Aorta (tissue), 5 donors: ENCODE measurements at regions of chr6 and their contacts with region 1.

Region 1: GRCh38 chr6:73732845-73733675 is 37.1 kb downstream of the CD109 start:
- DNase-seq: peak; percentile 73 to 77
- ATAC-seq: peak; percentile 90
- H3K4me3 ChIP-seq: no peak overlapping the region
- H3K27ac ChIP-seq: no peak overlapping the region
- H3K4me1 ChIP-seq: no peaks in the 10 kb centered on the region
- H3K27me3 ChIP-seq: no peaks in the 10 kb centered on the region

Region 2: DNA sequence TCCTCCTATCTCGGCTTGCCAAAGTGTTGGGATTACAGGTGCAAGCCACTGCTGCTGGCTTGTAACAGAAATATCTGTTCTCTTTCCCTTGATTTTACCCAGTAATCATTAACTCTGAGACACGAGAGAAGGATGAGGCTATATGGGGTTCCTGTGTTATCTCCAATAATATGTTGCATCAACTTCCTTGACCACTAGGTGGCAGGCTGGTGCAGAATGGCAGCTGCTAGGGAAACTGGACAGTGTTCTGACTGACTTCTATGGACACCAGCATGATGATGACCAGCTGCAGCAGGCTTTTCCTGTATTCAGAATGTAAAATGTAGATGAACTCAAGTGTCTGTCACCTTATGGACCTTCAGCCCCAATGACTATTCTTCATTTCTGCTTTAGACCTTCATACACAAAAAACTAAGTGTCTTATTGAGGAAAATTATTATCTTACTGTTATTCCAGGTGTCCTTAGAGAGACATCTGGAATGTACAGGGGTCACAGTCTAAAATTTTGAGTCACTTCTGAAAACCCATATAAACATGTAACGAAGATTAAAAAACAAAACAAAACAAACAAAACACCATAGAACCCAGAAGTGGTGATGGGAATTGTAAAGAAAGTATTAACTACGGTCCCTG is 57.5 kb before region 1 on chr6:
- intact Hi-C with region 1: loop called (anchors 2 kb)
- DNase-seq: peak; percentile 74 to 84
- ATAC-seq: peak; percentile 84
- H3K4me3 ChIP-seq: no peak overlapping the region
- H3K27ac ChIP-seq: no peak overlapping the region
- H3K4me1 ChIP-seq: peaks cover 0 to 3% of the 10 kb centered on the region in 2 donors
- H3K27me3 ChIP-seq: no peaks in the 10 kb centered on the region

Region 3: GRCh38 chr6:73774311-73774787 is 41.3 kb after region 1 on chr6:
- intact Hi-C with region 1: no loop called
- DNase-seq: no peak
- ATAC-seq: no peak
- H3K4me3 ChIP-seq: no peak overlapping the region
- H3K27ac ChIP-seq: no peak overlapping the region
- H3K4me1 ChIP-seq: no peaks in the 10 kb centered on the region
- H3K27me3 ChIP-seq: no peaks in the 10 kb centered on the region